Mammary epithelial cell (primary cell): ENCODE measurements at regions of chr10 and their contacts with region 1.

Region 1: GRCh38 chr10:46106410-46107255 is 60.6 kb upstream of the MSMB start:
- DNase-seq: peak; percentile 39
- H3K4me3 ChIP-seq: peak overlapping the region; percentile 21 to 50 (median 40)
- H3K27ac ChIP-seq: no peak overlapping the region
- H3K4me1 ChIP-seq: peaks cover 5% of the 10 kb centered on the region
- H3K27me3 ChIP-seq: peaks cover 11% of the 10 kb centered on the region
- CTCF ChIP-seq: no peak

Region 2: DNA sequence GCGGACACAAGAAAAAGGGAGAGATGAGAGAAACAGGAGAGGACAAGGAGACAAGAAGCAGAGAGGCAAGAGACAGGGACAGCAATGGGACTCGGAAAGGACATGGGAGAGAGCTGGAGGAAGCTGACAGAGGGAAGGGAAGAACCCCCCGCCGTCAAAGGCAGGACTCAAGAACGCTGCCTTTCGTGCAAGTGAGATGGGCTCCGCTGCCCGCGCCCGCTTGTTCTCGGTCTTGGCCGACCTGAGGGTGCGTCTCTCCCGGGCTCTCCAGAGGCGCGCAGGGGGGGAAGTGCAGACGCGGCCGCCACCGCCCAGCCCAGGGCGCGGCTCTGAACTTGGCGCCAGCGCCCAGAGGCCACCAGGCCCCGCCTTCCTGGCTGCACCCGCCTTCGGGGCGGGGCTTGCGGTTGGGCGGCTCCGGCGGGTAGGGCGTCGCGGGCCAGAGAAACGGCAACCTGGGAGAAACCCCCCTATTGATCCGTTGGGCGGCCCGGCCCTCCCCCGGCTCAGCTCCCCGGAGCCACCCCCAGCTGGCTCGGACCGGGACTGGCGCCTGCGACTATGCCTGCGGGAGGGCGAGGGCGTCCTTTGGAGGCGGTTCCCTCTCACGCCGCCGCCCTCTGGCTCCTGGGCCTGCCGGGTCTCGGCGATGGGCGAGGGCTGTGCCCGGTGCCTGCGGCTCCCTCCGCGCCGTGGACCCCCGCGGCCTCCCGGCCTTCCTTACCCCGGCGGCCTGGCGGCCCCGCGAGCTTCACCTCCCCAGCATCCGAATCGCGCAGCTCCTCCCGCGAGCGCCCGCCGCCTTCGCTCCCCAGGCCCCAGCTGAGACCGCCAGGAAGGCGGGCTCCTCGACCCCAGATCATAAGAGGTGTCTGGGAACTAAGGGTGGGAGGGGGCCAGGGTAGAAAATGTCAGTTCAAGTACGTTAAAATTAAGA is 177.9 kb after region 1 on chr10:
- CTCF ChIA-PET with region 1: no interaction called
- dilution Hi-C with region 1: no loop called
- in situ Hi-C with region 1: loop called in 1 of 2 experiments (anchors 10 kb)
- intact Hi-C with region 1: loop called (anchors 5 kb)
- DNase-seq: peak; percentile 73
- H3K4me3 ChIP-seq: peak overlapping the region; percentile 62 to 75 (median 68)
- H3K27ac ChIP-seq: peak overlapping the region; percentile 40
- H3K4me1 ChIP-seq: peaks cover 26% of the 10 kb centered on the region
- H3K27me3 ChIP-seq: peaks cover 10% of the 10 kb centered on the region
- CTCF ChIP-seq: no peak

Region 3: DNA sequence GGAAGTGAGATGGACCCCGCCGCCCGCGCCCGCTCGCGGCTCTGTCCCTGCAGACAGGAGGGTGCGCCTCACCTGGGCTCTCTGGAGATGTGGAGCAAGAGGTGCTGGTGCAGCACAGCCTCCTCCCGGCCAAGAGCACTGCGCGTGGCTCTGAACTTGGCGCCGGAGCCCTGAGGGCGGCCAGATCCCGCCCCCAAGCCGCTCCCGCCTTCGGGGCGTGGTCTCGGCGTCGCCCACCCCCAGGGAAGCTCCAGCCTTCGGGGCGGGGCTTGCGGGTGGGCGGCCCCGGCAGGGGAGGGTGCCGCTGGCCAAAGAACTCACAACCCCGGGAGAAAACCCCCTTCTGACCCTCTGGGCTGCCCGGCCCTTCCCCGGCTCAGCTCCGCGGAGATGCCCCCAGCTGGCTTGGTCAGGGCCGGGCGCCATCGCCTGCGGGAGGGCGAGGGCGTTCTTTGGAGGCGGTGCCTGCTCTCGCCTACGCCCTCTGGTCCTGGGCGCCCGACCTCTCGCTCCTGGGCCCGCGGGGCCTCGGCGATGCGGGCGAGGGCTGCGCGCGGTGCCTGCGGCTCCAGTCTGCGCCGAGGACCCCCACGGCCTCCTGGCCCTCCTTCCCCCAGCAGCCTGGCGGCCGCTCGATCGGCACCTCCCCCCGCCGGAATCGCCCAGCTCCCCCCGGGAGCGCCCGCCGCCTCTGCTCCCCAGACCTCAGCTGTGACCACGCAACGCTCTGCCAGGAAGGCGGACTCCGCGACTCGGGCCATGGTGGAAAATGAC is 1277.7 kb after region 1 on chr10 and contains the start of gene ZNF488:
- CTCF ChIA-PET with region 1: no interaction called
- dilution Hi-C with region 1: no loop called
- in situ Hi-C with region 1: loop called in 1 of 2 experiments (anchors 5 kb)
- intact Hi-C with region 1: no loop called
- DNase-seq: peak; percentile 85
- H3K4me3 ChIP-seq: peak within 1 kb of the TSS; percentile 81 to 85 (median 82)
- H3K27ac ChIP-seq: peak within 1 kb of the TSS; percentile 66
- H3K4me1 ChIP-seq: peaks cover 18% of the 10 kb centered on the region
- H3K27me3 ChIP-seq: no peaks in the 10 kb centered on the region
- CTCF ChIP-seq: peak in 1 of 2 donors; percentile 10
- total RNA-seq, gene ZNF488: 0.67 to 1.4 TPM